GM12878 (cell line): ENCODE measurements at regions of chr5 and their contacts with region 1.

Region 1: DNA sequence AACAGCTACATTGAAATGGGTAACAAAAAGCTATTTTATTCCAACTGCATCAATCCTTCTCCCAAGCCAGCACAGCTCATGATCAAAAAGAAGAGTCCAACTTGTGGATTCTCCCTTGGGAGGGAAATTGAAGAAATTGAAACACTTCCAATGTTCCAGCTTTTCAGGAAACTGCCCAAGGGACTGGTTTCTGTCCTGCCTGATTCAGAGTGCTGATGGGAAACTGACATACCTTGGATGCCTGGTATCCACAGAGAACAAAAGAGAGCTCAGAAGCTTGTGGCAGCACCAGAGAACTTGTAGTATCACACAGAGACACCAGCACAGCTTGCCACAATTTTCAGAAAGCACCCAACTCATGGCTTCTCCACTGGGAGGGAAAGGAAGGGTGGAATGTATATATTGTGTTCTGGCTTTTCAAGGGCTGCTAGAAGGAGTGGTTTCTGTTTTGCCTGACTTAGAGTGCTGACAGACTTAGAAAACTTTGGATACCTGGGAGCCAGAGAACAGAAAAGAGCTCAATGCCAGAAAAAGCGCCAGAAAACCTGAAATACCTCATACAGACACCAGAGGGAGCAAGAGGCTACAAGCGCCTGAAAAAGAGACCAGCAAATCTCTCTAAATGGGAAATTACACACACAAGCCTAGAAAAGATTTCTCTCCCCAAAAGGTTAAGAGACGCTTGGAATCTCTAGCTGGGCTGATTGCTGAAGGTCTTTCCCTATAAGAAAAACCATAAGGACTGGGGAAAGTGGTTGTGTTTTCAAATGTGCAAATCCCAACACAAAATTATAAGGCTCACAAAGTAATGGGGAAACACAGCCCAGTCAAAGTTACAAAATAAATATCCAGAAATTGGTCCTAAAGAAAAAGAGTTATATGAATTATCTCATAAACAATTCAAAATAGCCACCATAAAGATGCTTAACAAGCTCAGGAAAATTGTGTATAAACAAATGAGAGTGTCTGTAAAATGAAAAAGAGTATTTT is 178.8 kb downstream of the SPOCK1 start:
- DNase-seq: no peak
- ATAC-seq: peak; percentile 56; the same call in 1 of the 3 replicates
- H3K4me3 ChIP-seq: no peak overlapping the region
- H3K27ac ChIP-seq: no peak overlapping the region
- H3K4me1 ChIP-seq: no peaks in the 10 kb centered on the region
- H3K27me3 ChIP-seq: no peaks in the 10 kb centered on the region; a peak in 1 of 4 replicates
- CTCF ChIP-seq: peak; percentile 69 to 77 (median 75)
- EP300 ChIP-seq: no peak
- POLR2A ChIP-seq: no peak
- RAD21 ChIP-seq: peak; percentile 70

Region 2: GRCh38 chr5:137292461-137293027 is 27.8 kb before region 1 on chr5:
- CTCF ChIA-PET with region 1: interaction called, 12 read pairs
- POLR2A ChIA-PET with region 1: no interaction called
- RAD21 ChIA-PET with region 1: interaction called, 3 read pairs
- SMC1A ChIA-PET with region 1: interaction called, 7 read pairs
- in situ Hi-C with region 1: no loop called
- intact Hi-C with region 1: no loop called
- DNase-seq: no peak
- ATAC-seq: no peak
- H3K4me3 ChIP-seq: no peak overlapping the region
- H3K27ac ChIP-seq: no peak overlapping the region
- H3K4me1 ChIP-seq: no peaks in the 10 kb centered on the region
- H3K27me3 ChIP-seq: peaks cover 0 to 6% of the 10 kb centered on the region in 2 experiments; a peak in 1 of 4 replicates
- CTCF ChIP-seq: no peak
- EP300 ChIP-seq: no peak
- POLR2A ChIP-seq: no peak
- RAD21 ChIP-seq: no peak

Region 3: DNA sequence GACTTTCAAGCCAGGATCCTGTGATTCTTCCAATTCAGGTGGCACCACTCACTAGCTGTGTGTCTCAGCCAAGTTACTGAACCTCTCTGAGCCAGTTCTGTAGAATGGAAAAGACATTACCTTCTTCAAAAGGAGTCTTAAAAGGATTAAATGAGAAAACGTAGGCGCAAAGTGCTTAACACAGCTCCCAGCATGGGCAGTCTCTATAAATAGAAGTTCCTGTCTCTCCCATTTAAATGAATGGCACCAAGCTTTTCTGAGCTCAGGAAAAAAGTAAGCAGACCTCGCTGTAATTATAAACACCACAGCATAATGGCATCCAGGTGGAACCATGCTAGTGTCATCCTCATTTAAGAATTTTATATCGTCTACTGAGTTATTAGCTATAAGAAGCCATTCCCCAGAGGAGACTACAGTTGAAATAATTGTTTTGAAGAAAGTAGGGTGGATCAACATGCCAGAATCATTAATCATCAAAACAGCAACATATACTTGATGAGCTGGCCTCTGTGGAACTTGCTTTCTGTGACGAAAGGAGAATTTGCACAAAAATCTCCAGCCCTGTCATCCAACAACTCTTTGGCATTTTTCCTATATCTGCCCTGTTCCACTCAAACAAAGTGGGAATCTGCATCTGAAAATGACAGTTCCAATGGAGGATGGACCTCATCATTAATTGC is 10.2 kb before region 1 on chr5:
- CTCF ChIA-PET with region 1: interaction called, 13 read pairs
- POLR2A ChIA-PET with region 1: interaction called, 3 read pairs
- RAD21 ChIA-PET with region 1: interaction called, 4 read pairs
- SMC1A ChIA-PET with region 1: interaction called, 3 read pairs
- in situ Hi-C with region 1: no loop called
- intact Hi-C with region 1: no loop called
- DNase-seq: no peak
- ATAC-seq: no peak
- H3K4me3 ChIP-seq: no peak overlapping the region
- H3K27ac ChIP-seq: no peak overlapping the region
- H3K4me1 ChIP-seq: no peaks in the 10 kb centered on the region
- H3K27me3 ChIP-seq: no peaks in the 10 kb centered on the region; a peak in 1 of 4 replicates
- CTCF ChIP-seq: no peak
- EP300 ChIP-seq: no peak
- POLR2A ChIP-seq: no peak
- RAD21 ChIP-seq: no peak

Region 4: GRCh38 chr5:137344723-137345322 is 24.5 kb after region 1 on chr5:
- CTCF ChIA-PET with region 1: interaction called, 18 read pairs
- POLR2A ChIA-PET with region 1: no interaction called
- RAD21 ChIA-PET with region 1: interaction called, 3 read pairs
- SMC1A ChIA-PET with region 1: interaction called, 8 read pairs
- in situ Hi-C with region 1: no loop called
- intact Hi-C with region 1: no loop called
- DNase-seq: no peak
- ATAC-seq: peak; percentile 34; the same call in 1 of the 3 replicates
- H3K4me3 ChIP-seq: no peak overlapping the region
- H3K27ac ChIP-seq: no peak overlapping the region
- H3K4me1 ChIP-seq: no peaks in the 10 kb centered on the region
- H3K27me3 ChIP-seq: no peaks in the 10 kb centered on the region
- CTCF ChIP-seq: peak; percentile 45 to 96 (median 82)
- EP300 ChIP-seq: no peak
- POLR2A ChIP-seq: no peak
- RAD21 ChIP-seq: peak; percentile 60

Region 5: DNA sequence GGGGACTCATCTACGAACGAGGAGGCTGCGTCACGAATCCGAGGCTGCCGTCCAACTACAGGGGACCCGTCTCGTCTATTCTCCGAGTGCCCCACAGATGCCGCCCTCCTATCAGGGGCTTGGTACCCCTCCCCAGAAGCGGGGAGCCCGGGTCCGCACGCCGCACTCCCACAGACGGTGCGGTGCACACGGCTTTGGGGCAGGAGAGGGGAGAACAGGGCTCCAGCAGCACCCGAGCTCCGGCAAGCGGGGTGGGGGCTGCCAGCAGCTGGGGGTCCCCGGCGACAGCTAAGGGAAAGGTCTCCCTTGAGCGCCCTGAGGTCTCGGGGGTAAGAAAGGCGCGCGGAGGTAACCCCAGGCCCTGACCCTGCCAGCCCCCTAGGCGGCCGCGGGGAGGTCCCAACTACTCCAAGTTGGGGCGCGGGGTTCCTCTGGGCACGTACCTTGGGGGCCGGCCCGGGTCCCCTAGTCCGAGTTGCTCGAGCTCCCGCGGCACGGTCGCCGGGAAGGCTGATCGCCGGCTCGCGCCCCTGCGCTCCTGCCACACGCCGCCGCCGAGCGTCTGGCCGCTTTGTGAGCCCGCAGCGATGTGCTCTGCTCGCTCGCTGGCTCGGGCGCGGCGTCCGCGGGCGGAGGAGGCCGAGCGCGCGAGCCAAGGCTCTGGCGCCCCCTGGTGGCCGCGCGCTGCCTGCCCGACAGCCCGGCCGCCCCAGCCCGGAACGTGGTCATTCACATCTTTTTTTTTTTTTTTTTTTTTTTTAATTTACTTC is 178.6 kb after region 1 on chr5 and contains the start of gene SPOCK1:
- CTCF ChIA-PET with region 1: interaction called, 35 read pairs
- POLR2A ChIA-PET with region 1: no interaction called
- RAD21 ChIA-PET with region 1: interaction called, 10 read pairs
- SMC1A ChIA-PET with region 1: interaction called, 16 read pairs
- in situ Hi-C with region 1: loop called (anchors 5 kb)
- intact Hi-C with region 1: loop called (anchors 1 kb)
- DNase-seq: no peak
- ATAC-seq: peak; percentile 100
- H3K4me3 ChIP-seq: no peak within 1 kb of the TSS
- H3K27ac ChIP-seq: no peak within 1 kb of the TSS
- H3K4me1 ChIP-seq: no peaks in the 10 kb centered on the region
- H3K27me3 ChIP-seq: peaks cover 4 to 10% of the 10 kb centered on the region in 2 experiments
- CTCF ChIP-seq: peak; percentile 57 to 76 (median 70); a peak in 5 of 6 replicates
- EP300 ChIP-seq: no peak
- POLR2A ChIP-seq: no peak
- RAD21 ChIP-seq: peak; percentile 68
- polyA plus RNA-seq, gene SPOCK1: not detected